ENCODE measurements at regions of chr10 and their contacts with region 1.

Region 1: GRCh38 chr10:13414894-13415293 is 66.8 kb upstream of the SEPHS1 start:
- DNase-seq: peak; percentile 39
- H3K4me3 ChIP-seq: no peak overlapping the region
- H3K27ac ChIP-seq: peak overlapping the region in 1 of 4 donors; percentile 10
- H3K4me1 ChIP-seq: peaks cover 0 to 7% (median 0%) of the 10 kb centered on the region in 4 donors
- H3K27me3 ChIP-seq: no peaks in the 10 kb centered on the region
- CTCF ChIP-seq: peak in 2 of 5 experiments; percentile 17 to 28
- EP300 ChIP-seq: no peak
- POLR2A ChIP-seq: no peak

Region 2: DNA sequence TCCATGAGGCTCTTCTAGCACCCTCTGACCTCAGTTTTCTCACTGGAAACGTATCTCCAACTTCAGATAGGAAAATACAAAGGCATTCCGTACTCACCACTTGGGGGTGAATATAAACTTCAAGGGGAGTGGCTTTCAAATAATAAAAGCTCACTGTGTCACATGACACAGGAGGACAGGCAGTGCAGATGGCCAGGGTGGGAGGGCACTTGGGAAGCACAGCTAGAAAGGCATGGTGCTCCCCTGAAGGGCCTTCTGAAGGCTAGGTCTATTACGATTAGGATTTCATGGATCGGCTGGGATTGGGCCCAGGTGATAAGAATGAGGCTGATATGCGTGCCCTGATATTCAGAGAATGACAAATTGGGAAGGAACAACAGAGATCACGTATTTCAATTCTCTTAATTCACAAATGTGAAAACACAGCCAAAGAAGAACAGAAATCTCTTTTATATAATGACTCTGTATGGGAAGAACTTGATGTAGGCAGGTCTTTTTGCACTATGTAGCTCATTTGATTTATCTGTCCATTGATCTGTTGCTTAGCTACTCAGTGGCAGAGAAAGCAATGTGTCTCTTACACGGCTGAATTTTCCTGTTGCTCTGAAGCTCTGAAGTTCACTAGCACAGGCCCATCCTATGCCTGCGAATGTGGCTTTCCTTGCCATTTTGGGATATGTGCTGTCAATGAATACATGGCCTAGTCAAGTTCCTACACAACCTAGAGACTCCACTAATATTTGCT is 30.9 kb after region 1 on chr10:
- in situ Hi-C with region 1: no loop called
- intact Hi-C with region 1: loop called (anchors 1 kb)
- DNase-seq: no peak
- H3K4me3 ChIP-seq: no peak overlapping the region
- H3K27ac ChIP-seq: no peak overlapping the region
- H3K4me1 ChIP-seq: no peaks in the 10 kb centered on the region
- H3K27me3 ChIP-seq: peaks cover 3% of the 10 kb centered on the region
- CTCF ChIP-seq: no peak
- EP300 ChIP-seq: no peak
- POLR2A ChIP-seq: no peak